GM12878 (cell line): ENCODE measurements at regions of chr3 and their contacts with region 1.

Region 1: DNA sequence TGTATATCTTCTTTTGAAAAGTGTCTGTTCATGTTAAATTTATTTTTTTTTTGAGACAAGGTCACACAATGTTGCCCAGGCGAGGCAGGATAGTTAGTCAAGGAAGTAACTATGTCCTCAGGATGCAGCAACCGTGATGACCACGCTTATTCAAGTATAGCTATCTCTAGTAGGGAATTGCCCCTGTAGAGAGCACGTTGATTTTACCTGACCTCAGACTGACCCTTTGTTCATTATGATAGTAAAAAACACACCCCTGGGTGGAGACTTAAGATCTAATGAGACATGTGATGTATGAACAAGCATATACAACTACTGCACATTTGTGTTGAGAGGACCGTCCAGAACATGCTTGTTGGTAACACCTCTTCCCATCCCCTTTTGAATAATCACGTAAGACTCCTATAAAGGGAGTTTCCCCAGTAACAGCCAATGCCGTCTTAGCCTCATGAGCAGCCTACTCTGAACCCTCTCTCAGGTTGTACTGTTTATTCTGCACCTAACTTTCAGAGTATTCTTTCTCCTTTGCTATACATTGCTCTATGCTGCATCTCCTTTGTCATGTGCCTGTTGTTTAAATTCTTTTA is 32.9 kb downstream of the ZNF621 start:
- DNase-seq: no peak
- ATAC-seq: peak; percentile 92
- H3K4me3 ChIP-seq: no peak overlapping the region
- H3K27ac ChIP-seq: no peak overlapping the region
- H3K4me1 ChIP-seq: no peaks in the 10 kb centered on the region; the same call in 1 of the 2 replicates
- H3K27me3 ChIP-seq: no peaks in the 10 kb centered on the region
- CTCF ChIP-seq: no peak
- EP300 ChIP-seq: no peak
- POLR2A ChIP-seq: no peak
- RAD21 ChIP-seq: no peak

Region 2: DNA sequence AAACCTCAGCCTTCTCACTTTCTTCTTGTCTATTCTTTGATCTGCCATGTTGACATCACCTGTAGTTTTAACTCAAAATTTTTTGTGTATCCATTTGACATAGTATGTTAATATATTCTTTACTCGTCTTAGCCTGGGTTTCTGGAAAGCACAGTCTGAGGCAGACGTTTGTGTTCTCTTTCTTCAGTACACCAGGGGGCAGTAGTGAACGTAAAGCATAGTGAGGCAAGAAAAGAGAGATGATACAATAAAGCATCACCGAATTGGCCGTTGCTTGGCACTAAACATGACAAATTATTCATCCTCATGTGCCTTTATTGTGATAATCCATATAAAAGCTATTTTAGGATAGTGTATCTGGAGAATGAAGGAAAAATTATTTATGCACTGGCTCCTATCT is 889.2 kb before region 1 on chr3:
- CTCF ChIA-PET with region 1: no interaction called
- POLR2A ChIA-PET with region 1: interaction called, 12 read pairs
- RAD21 ChIA-PET with region 1: no interaction called
- SMC1A ChIA-PET with region 1: no interaction called
- in situ Hi-C with region 1: no loop called
- intact Hi-C with region 1: no loop called
- DNase-seq: no peak
- ATAC-seq: peak; percentile 85
- H3K4me3 ChIP-seq: no peak overlapping the region
- H3K27ac ChIP-seq: no peak overlapping the region
- H3K4me1 ChIP-seq: no peaks in the 10 kb centered on the region
- H3K27me3 ChIP-seq: no peaks in the 10 kb centered on the region; a peak in 2 of 4 replicates
- CTCF ChIP-seq: peak; percentile 53 to 60 (median 58)
- EP300 ChIP-seq: no peak
- POLR2A ChIP-seq: no peak
- RAD21 ChIP-seq: peak; percentile 48